ENCODE measurements at regions of chr20 and their contacts with region 1.

Region 1: GRCh38 chr20:3229798-3230197 is 9.2 kb downstream of the SLC4A11 start:
- DNase-seq: no peak

Region 2: DNA sequence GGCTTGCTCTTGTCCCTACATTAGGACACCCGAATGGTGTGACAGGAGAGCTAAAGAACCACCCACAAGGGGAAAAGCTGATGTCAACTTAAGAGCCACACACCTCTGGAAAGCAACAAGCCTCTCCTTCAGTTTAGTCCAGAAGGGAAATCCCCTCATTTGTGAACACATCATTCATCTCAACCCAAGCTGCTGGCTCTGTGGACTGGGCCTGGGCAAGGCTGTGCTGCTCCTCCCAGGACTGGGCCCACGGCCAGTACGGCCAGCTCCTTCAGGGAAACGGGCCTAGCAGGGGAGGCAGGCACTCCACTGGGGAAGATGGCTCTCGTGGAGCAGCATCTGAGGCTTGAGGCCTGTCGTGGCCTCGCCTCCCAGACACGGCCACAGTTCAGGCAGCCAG is 22.0 kb after region 1 on chr20:
- intact Hi-C with region 1: loop called in 1 of 2 experiments (anchors 1 kb)
- DNase-seq: no peak

Region 3: GRCh38 chr20:3307078-3307477 is 77.3 kb after region 1 on chr20:
- intact Hi-C with region 1: no loop called
- DNase-seq: no peak